ENCODE measurements at regions of chr13 and their contacts with region 1.

Region 1: DNA sequence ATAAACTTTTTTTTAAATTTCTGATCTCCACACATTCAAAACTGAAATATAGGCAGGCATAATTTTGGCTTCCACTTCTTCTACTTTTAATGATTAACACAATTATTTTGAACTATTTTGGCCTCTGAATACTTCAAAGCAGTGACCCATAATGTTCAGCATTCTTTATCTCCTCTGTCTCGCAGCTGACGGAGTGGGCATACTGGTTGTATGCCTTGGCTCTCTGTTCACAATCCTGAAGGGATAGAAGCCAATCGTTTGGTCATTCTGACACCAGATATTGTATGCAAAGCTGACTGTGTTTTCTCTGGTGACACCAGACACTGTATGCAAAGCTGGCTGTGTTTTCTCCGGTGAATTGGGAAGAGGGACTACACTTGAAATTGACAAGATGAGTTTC is 833.0 kb downstream of the EFNB2 start:
- DNase-seq: no peak

Region 2: DNA sequence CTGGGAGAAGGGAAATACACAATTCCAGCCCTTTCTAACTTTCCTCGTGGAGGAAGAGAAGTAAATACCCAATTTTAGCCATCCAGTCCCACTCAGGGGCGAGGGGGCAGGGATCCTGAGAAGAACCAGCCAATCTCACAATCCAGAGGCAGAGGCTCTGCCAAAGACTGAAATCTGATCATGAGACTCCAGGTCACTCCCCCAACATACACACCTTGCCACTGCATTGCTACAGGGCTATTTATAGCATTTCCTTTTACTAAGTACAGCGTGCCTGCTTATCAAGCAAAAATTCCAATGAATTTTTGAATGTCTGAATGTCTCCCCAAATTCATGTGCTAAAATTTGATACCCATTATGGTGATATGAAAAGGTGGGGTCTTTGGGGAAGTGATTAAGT is 854.5 kb before region 1 on chr13:
- intact Hi-C with region 1: no loop called
- DNase-seq: no peak

Region 3: GRCh38 chr13:105735281-105735680 is 32.8 kb after region 1 on chr13:
- intact Hi-C with region 1: loop called in 1 of 2 experiments (anchors 1 kb)
- DNase-seq: no peak

Region 4: DNA sequence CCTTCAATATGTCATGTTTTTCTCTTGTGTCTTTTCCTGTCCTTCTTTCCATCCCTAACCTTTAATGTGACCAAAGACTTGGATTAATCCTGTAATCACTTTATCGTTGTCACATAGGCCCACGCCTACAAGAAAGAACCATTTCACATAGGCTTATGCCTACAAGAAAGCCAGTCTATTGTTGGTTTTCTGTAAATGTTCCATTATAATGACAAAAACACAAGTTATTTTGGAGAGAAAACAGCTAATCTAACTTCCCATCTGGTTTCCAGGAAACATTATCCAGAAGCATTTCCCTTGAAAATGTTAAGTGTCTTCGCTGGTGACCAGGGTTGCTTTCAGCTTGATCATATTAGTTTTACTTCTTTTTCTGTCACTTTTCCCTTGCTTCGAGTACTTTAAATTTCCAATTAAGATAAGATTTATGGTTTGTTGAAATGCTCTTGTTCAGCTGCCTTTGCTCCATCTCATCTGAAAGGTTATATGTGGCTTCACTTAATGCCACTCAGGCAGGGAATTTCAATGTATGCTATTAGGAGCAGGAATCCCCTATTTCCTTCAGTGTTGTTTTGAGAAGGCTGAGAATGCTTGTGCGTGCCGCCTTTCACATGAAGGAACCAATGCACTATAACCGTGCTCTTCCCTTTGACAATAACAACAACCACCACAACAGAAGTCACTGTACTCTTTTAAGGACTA is 124.8 kb after region 1 on chr13:
- intact Hi-C with region 1: no loop called
- DNase-seq: no peak